ENCODE measurements at regions of chr2 and their contacts with region 1.

Region 1: DNA sequence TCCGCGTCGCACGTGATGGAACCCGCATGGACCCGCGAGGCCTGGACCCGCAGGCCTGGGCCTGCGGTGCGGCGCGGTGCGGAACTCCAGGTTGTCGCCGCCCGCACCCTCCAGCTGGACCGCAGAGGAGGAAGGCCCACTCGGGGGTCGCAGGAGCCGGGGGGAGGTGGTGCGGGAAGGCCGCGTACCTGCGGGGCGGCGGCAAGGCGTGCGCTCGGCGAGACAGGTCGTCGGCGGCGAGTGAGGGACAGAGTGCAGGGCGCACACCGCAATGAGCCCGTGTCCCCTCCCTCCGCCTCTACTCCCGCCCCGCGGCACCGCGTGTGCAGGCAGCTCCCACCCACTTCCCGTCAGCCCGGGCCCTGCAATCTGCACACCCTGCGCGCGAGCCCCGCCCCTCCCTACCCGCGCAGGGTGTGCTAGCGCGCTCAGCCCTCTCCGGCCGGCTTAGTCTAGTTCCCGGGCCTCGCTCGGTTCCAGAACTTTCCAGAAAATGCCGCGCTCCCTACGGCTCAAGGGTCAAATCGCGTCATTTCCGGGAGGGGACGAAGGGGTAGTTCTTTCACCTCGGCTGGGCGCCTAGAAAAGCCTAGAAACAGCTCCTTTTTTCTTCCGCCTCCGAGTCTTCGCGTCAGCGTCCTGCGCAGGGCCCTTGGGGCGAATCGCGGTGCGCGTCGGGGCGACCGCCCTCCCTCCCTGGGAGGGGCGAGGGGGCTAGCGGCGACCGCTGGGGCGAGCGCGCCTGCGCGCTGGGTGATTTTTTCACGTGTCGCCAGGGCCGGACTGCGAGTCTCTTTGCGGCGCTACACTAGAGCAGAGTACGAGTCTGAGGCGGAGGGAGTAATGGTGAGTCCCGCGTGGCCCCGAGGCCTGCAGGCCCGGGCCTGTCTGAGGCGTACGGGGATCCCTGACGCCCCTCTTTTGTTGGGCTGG is at the starts of genes HSPD1 and HSPE1:
- DNase-seq: peak; percentile 94 to 98 (median 97)
- ATAC-seq: peak; percentile 80 to 84
- H3K4me3 Mint-ChIP-seq: peak within 1 kb of the TSS; percentile 88 to 99 (median 96)
- H3K27ac Mint-ChIP-seq: peak within 1 kb of the TSS; percentile 92 to 98 (median 97)
- H3K4me1 Mint-ChIP-seq: peaks cover 25 to 75% (median 59%) of the 10 kb centered on the region in 4 donors
- H3K27me3 Mint-ChIP-seq: no peaks in the 10 kb centered on the region
- polyA plus RNA-seq, gene HSPD1: 101 to 134 (median 128) TPM
- polyA plus RNA-seq, gene HSPE1: 154 to 181 (median 172) TPM

Region 2: GRCh38 chr2:197434541-197435513 is 65.0 kb before region 1 on chr2 and contains the start of gene SF3B1:
- POLR2A ChIA-PET with region 1: interaction called, 54 read pairs
- DNase-seq: peak; percentile 96 to 99 (median 99)
- ATAC-seq: peak; percentile 92 to 94
- H3K4me3 Mint-ChIP-seq: peak within 1 kb of the TSS; percentile 92 to 100 (median 99)
- H3K27ac Mint-ChIP-seq: peak within 1 kb of the TSS; percentile 100
- H3K4me1 Mint-ChIP-seq: peaks cover 32 to 57% (median 54%) of the 10 kb centered on the region in 4 donors
- H3K27me3 Mint-ChIP-seq: no peaks in the 10 kb centered on the region
- polyA plus RNA-seq, gene SF3B1: 120 to 131 (median 120) TPM

Region 3: DNA sequence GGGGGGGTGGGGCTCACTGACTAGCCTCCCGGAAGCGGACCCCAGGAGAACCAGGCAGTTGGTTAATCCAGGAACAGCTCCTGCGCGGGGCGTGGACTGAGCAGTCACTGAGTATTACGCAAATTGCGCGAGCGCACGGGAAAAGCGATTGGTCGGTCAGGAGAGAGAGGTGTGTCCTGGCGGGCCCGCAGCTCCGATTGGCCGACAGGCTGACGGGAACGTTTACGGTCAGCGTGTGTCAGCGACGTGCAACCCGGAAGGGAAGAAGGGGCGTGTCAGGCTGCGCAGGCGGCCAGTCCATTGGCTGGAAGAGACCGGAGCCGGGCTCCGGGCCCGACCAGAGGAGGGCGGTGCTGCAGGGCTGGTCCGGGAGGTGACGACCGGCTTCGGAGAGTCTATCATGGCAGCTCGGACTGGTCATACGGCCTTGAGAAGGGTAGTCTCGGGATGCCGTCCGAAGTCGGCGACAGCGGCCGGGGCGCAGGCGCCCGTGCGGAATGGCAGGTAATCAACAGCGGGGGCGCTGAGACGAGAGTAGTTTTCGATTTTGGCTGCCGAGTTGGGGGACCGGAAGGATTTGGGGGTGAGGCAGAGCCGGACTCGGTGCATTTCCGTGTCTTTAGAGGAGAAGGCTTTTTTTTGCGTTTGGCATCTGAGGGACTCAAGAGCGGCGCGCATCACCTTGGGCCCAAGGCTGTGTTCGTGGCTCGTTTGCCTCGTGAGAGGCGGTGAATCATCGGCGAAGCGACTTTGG is 46.5 kb before region 1 on chr2 and contains the start of gene COQ10B:
- POLR2A ChIA-PET with region 1: interaction called, 42 read pairs
- DNase-seq: peak; percentile 92 to 99 (median 98)
- ATAC-seq: peak; percentile 85 to 88
- H3K4me3 Mint-ChIP-seq: peak within 1 kb of the TSS; percentile 98 to 100 (median 100)
- H3K27ac Mint-ChIP-seq: peak within 1 kb of the TSS; percentile 100
- H3K4me1 Mint-ChIP-seq: peaks cover 22 to 54% (median 47%) of the 10 kb centered on the region in 4 donors
- H3K27me3 Mint-ChIP-seq: no peaks in the 10 kb centered on the region
- polyA plus RNA-seq, gene COQ10B: 30.0 to 43.4 (median 39.4) TPM

Region 4: DNA sequence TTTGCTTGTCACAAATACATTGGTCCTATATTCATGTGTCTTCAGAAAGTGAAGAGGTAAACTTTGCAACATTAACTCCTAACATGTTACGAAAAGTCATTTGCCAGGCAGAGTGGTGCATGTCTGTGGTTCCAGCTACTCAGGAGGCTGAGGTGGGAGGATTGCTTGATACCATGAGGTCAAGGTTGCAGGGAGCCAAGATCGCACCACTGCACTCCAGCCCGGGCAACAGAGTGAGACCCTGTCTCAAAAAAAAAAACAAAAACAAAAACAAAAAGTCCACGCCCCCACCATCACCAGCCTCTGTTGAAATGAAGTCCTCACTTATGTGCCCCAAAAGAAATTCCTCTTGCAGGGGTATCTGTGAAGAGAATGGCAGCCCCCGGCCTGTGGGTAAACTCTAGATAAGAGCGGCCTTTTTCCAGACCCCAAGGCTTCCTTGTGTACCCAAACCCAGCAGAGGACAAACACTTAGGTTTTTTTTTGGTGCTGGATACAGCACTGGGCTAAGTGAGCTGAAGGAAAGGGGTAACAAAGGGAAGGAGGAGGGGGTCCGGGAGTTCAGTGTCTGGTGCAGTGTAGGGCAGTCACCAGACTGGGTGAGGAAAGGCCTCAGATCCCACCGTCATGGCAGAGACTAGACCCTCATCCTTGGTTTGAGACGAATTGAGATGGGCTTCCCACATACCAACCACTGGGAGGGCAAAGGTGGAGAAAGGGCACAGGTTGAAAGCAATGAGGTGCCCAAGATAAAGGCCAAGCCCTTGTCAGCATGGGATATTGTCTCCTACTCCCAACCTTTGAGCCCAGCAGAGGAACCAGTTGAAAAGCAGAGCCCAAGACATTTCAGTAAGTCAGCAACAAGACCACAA is 19.5 kb before region 1 on chr2:
- POLR2A ChIA-PET with region 1: interaction called, 11 read pairs
- DNase-seq: no peak
- ATAC-seq: peak in 1 of 2 donors; percentile 15
- H3K4me3 Mint-ChIP-seq: no peak overlapping the region
- H3K27ac Mint-ChIP-seq: peak overlapping the region in 4 of 10 donors; percentile 52 to 68 (median 61)
- H3K4me1 Mint-ChIP-seq: peaks cover 0 to 4% (median under 1%) of the 10 kb centered on the region in 4 donors
- H3K27me3 Mint-ChIP-seq: no peaks in the 10 kb centered on the region

Region 5: DNA sequence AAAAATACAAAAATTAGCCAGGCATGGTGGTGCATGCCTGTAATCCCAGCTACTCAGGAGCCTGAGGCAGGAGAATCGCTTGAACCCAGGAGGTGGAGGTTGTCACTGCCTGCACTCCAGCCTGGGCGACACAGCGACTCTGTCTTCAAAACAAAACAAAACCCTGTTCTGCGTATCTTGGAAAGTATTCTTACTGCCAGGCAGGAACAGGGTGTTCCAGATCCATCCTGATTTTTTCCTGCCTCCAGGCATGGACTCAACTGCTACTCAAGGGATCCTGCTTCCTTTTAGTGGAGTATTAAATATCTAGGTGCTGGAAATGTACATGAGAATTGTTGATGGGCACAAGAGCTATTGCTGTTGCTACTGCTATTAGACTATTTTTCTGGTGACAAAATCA is 12.5 kb before region 1 on chr2:
- POLR2A ChIA-PET with region 1: interaction called, 22 read pairs
- DNase-seq: no peak
- ATAC-seq: no peak
- H3K4me3 Mint-ChIP-seq: no peak overlapping the region
- H3K27ac Mint-ChIP-seq: peak overlapping the region in 3 of 10 donors; percentile 0 to 47 (median 28)
- H3K4me1 Mint-ChIP-seq: peaks cover 0 to 6% (median 0%) of the 10 kb centered on the region in 4 donors
- H3K27me3 Mint-ChIP-seq: no peaks in the 10 kb centered on the region

Region 6: GRCh38 chr2:197515739-197516392 is 16.0 kb after region 1 on chr2 and contains the start of gene MOB4:
- POLR2A ChIA-PET with region 1: interaction called, 150 read pairs
- DNase-seq: peak; percentile 87 to 95 (median 92)
- ATAC-seq: peak; percentile 84 to 87
- H3K4me3 Mint-ChIP-seq: peak within 1 kb of the TSS; percentile 80 to 99 (median 94)
- H3K27ac Mint-ChIP-seq: peak within 1 kb of the TSS; percentile 88 to 99 (median 95)
- H3K4me1 Mint-ChIP-seq: peaks cover 17 to 61% (median 35%) of the 10 kb centered on the region in 4 donors
- H3K27me3 Mint-ChIP-seq: no peaks in the 10 kb centered on the region
- polyA plus RNA-seq, gene MOB4: 19.4 to 29.1 (median 23.6) TPM

Region 7: GRCh38 chr2:197705121-197705911 is 205.5 kb after region 1 on chr2 and contains the start of gene MARS2:
- POLR2A ChIA-PET with region 1: interaction called, 25 read pairs
- DNase-seq: peak; percentile 86 to 96 (median 93)
- ATAC-seq: peak; percentile 81 to 84
- H3K4me3 Mint-ChIP-seq: peak within 1 kb of the TSS; percentile 85 to 95 (median 92)
- H3K27ac Mint-ChIP-seq: peak within 1 kb of the TSS; percentile 92 to 99 (median 96)
- H3K4me1 Mint-ChIP-seq: peaks cover 26 to 54% (median 46%) of the 10 kb centered on the region in 4 donors
- H3K27me3 Mint-ChIP-seq: peaks cover 0 to 9% (median 1%) of the 10 kb centered on the region in 5 donors
- polyA plus RNA-seq, gene MARS2: 8.4 to 12.7 (median 12.5) TPM

Measured in naive thymus-derived CD8-positive, alpha-beta T cell (primary cell).